Natural killer cell (primary cell): ENCODE measurements at regions of chr14 and their contacts with region 1.

Region 1: DNA sequence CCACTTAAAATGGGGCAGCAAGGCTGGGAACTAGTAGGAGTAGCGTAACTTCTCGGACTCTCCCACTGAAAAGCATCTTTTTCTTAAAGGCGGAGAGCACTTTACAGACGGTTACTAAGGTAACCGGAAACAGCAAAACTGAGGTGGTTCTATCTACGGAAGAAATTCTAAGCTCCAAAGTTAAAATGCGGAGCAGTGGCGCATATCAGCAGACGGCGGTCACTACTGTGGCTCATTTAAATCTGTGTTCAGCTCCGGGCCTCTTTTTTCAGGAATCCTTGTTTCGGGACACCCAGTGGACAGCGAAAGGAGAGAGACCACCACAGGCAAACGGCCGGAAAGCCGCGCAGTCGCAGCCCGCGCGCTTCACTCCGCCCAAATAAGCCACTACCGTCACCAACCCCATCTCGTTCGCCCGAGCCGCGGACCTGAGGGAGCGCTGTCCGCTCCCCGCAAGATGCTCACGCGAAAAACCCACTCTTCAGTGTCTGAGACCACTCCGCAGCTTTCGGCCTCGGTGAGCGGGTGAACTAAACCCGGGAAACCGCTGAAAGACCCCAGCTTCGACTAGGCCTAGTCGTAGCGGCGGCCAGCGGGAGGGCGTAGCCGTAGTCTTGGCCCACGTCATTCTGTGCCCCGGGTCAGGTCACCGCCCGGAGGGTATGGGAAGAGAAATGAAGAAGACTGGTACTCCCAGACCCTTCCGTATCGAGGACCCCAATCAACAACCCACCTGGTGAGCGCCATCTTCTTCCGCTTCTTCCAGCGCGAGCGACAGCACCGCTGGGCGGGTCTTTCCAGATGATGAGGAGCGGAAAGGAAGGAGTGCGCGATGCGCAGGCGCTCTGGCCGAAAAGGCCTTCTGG is at the start of gene SNW1:
- DNase-seq: peak; percentile 81 to 98
- ATAC-seq: peak; percentile 90 to 95 (median 92)
- H3K4me3 ChIP-seq: peak within 1 kb of the TSS; percentile 81
- H3K4me3 Mint-ChIP-seq: peak within 1 kb of the TSS; percentile 94
- H3K27ac ChIP-seq: peak within 1 kb of the TSS; percentile 96
- H3K27ac Mint-ChIP-seq: peak within 1 kb of the TSS; percentile 95 to 97
- H3K4me1 ChIP-seq: peaks cover 26% of the 10 kb centered on the region
- H3K4me1 Mint-ChIP-seq: peaks cover 32 to 41% of the 10 kb centered on the region in 2 donors
- H3K27me3 ChIP-seq: no peaks in the 10 kb centered on the region
- H3K27me3 Mint-ChIP-seq: no peaks in the 10 kb centered on the region
- CTCF ChIP-seq: no peak
- total RNA-seq, gene SNW1: 89.7 to 106 (median 103) TPM

Region 2: DNA sequence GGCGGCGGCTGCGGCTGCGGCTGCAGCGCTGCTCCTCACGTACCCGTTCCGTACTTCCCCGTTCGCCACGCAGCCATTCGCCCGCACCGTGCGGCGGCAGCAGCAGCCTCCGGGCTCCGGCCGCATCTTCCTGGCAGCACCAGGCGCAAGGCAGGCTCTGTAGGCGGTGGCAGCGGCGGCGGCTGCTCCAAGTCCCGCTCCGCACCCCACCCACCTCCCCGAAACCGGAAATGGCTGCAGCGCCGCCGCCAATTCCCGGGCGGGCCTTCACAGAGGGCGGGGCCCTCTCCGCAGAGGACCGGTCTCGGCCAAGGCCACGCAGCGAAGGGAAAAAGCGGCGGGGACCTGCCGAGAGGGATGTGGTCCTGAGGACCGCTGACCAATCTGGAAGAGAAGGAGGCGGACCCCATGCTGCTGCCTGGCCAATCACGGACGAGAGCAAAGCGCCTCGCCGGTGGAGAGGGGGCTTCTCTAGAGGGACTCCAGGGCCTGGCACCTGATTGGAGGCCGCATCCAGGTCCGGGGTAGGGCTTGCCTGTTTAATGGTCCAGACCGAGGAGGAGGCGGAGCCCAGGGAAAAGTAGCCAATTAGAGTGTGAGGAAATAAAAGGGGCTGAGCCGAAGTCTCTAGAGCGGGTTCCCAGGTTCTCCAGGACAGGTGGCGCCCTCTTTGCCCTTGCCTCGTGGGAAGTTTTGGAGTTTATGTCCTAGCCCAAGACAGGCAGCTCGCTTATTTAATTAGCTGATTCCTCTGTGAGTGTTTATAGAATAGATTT is 144.0 kb before region 1 on chr14 and contains the start of gene SPTLC2:
- intact Hi-C with region 1: loop called (anchors 1 kb)
- DNase-seq: peak; percentile 94 to 99
- ATAC-seq: peak; percentile 92 to 99 (median 94)
- H3K4me3 ChIP-seq: peak within 1 kb of the TSS; percentile 55
- H3K4me3 Mint-ChIP-seq: peak within 1 kb of the TSS; percentile 92
- H3K27ac ChIP-seq: peak within 1 kb of the TSS; percentile 55
- H3K27ac Mint-ChIP-seq: peak within 1 kb of the TSS; percentile 83 to 92
- H3K4me1 ChIP-seq: peaks cover 15% of the 10 kb centered on the region
- H3K4me1 Mint-ChIP-seq: peaks cover 32 to 48% of the 10 kb centered on the region in 2 donors
- H3K27me3 ChIP-seq: no peaks in the 10 kb centered on the region
- H3K27me3 Mint-ChIP-seq: no peaks in the 10 kb centered on the region
- CTCF ChIP-seq: no peak
- total RNA-seq, gene SPTLC2: 35.2 to 58.6 (median 50.4) TPM

Region 3: GRCh38 chr14:77707724-77708408 is 52.7 kb before region 1 on chr14 and contains the starts of genes ALKBH1 and SLIRP:
- intact Hi-C with region 1: loop called (anchors 1 kb)
- DNase-seq: peak; percentile 82 to 93
- ATAC-seq: peak; percentile 97 to 99 (median 98)
- H3K4me3 ChIP-seq: peak within 1 kb of the TSS; percentile 88
- H3K4me3 Mint-ChIP-seq: peak within 1 kb of the TSS; percentile 97
- H3K27ac ChIP-seq: peak within 1 kb of the TSS; percentile 30
- H3K27ac Mint-ChIP-seq: peak within 1 kb of the TSS; percentile 89 to 91
- H3K4me1 ChIP-seq: peaks cover 13% of the 10 kb centered on the region
- H3K4me1 Mint-ChIP-seq: peaks cover 32 to 37% of the 10 kb centered on the region in 2 donors
- H3K27me3 ChIP-seq: no peaks in the 10 kb centered on the region
- H3K27me3 Mint-ChIP-seq: no peaks in the 10 kb centered on the region
- CTCF ChIP-seq: no peak
- total RNA-seq, gene ALKBH1: 3.6 to 10.2 (median 7.1) TPM
- total RNA-seq, gene SLIRP: 29.5 to 33.1 (median 31.6) TPM

Region 4: GRCh38 chr14:77799863-77800730 is 39.5 kb after region 1 on chr14 and contains the start of gene ADCK1:
- intact Hi-C with region 1: loop called (anchors 1 kb)
- DNase-seq: peak; percentile 75 to 88
- ATAC-seq: peak; percentile 88 to 93 (median 91)
- H3K4me3 ChIP-seq: peak within 1 kb of the TSS; percentile 54
- H3K4me3 Mint-ChIP-seq: peak within 1 kb of the TSS; percentile 87
- H3K27ac ChIP-seq: peak within 1 kb of the TSS; percentile 67
- H3K27ac Mint-ChIP-seq: peak within 1 kb of the TSS; percentile 80 to 90
- H3K4me1 ChIP-seq: peaks cover 11% of the 10 kb centered on the region
- H3K4me1 Mint-ChIP-seq: peaks cover 5 to 9% of the 10 kb centered on the region in 2 donors
- H3K27me3 ChIP-seq: no peaks in the 10 kb centered on the region
- H3K27me3 Mint-ChIP-seq: no peaks in the 10 kb centered on the region
- CTCF ChIP-seq: peak; percentile 8
- total RNA-seq, gene ADCK1: 8.0 to 9.2 (median 8.5) TPM